Right ventricle myocardium inferior (tissue), 1 donor: ENCODE measurements at regions of chr3 and their contacts with region 1.

Region 1: GRCh38 chr3:99842826-99843589 is 25.3 kb downstream of the CMSS1 start:
- DNase-seq: no peak
- ATAC-seq: peak; percentile 68

Region 2: DNA sequence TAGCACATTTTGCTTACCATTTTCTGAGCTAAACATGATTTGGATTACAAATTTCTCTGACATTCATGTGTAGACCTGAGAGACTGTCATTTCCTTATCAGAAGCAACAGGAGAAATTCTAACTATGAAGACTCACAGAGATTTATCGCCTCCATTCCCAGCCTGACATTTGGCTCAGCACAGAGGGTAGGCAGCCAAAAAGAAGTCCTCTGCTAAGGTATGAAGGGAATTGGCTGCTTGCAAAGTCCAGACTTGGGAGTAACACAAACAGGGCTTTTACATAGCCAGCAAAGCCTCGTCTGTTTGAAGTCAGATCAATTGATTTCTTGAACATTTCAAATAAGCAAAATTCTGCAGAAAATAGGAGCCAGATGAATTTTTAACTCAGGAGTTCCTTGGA is 82.4 kb before region 1 on chr3:
- intact Hi-C with region 1: no loop called
- DNase-seq: no peak
- ATAC-seq: peak; percentile 89

Region 3: GRCh38 chr3:100068826-100069225 is 225.8 kb after region 1 on chr3:
- intact Hi-C with region 1: loop called (anchors 5 kb)
- DNase-seq: peak; percentile 81
- ATAC-seq: peak; percentile 88